MCF 10A (cell line): ENCODE measurements at regions of chr1 and their contacts with region 1.

Region 1: GRCh38 chr1:235160957-235161684 is at the start of gene RBM34:
- DNase-seq: peak; percentile 97
- H3K4me3 Mint-ChIP-seq: peak within 1 kb of the TSS; percentile 84
- H3K27ac Mint-ChIP-seq: peak within 1 kb of the TSS; percentile 95
- H3K4me1 Mint-ChIP-seq: peaks cover 14% of the 10 kb centered on the region
- H3K27me3 Mint-ChIP-seq: no peaks in the 10 kb centered on the region
- CTCF ChIP-seq: no peak
- total RNA-seq, gene RBM34: 150 and 184 TPM in 2 replicates

Region 2: GRCh38 chr1:234478481-234479309 is 682.4 kb before region 1 on chr1 and contains the start of gene TARBP1:
- CTCF ChIA-PET with region 1: no interaction called
- POLR2A ChIA-PET with region 1: interaction called, 11 read pairs
- intact Hi-C with region 1: loop called (anchors 10 kb)
- DNase-seq: peak; percentile 89
- H3K4me3 Mint-ChIP-seq: peak within 1 kb of the TSS; percentile 77
- H3K27ac Mint-ChIP-seq: no peak within 1 kb of the TSS
- H3K4me1 Mint-ChIP-seq: peaks cover 31% of the 10 kb centered on the region
- H3K27me3 Mint-ChIP-seq: peaks cover 23% of the 10 kb centered on the region
- CTCF ChIP-seq: no peak
- total RNA-seq, gene TARBP1: 45.5 and 52.5 TPM in 2 replicates

Region 3: DNA sequence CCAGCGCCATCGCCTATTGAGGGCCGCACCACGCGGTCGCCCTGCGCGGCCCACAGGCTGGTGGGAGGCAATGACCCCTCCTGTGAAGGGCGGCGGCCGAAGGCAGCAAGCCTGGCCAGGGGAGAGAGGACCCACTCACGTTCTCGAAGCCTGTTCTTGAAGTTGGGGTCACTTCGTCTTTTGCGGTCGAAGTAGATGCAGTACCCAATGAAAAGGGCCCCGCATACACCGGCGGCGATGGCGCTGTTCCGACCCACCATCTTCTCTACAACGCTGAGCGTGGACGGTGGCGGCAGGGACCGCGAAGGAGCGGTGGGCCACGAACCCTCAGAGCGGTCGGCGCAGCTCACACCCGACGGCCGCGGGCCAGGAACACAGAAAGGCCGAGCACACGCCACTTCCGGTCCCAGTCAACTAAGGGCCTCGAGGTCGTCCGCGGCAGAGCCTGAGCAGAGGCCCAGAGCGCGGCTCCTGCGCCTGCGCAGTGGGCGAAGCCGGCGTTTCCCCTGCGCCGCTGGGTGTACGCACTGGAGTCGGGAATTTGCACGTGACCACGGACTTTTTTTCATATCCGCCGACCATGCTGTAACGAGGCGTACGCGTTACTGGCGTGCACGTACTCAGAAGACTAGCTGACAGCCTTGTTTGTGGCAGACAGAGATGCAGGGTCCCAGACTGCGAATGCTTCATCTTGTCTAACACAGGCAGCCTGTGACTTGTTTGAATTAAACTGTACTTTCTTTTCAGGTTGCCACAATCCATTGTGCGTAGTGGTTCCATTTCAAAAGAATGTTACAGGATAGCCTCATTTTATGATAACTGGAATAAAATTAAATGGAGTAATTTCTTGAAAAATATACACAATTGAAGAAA is 32.4 kb before region 1 on chr1 and contains the start of gene TOMM20:
- CTCF ChIA-PET with region 1: interaction called, 5 read pairs
- POLR2A ChIA-PET with region 1: interaction called, 131 read pairs
- intact Hi-C with region 1: no loop called
- DNase-seq: peak; percentile 100
- H3K4me3 Mint-ChIP-seq: peak within 1 kb of the TSS; percentile 100
- H3K27ac Mint-ChIP-seq: peak within 1 kb of the TSS; percentile 99
- H3K4me1 Mint-ChIP-seq: peaks cover 23% of the 10 kb centered on the region
- H3K27me3 Mint-ChIP-seq: no peaks in the 10 kb centered on the region
- CTCF ChIP-seq: no peak
- total RNA-seq, gene TOMM20: 309 and 339 TPM in 2 replicates

Region 4: GRCh38 chr1:235147269-235147668 is 13.9 kb before region 1 on chr1:
- CTCF ChIA-PET with region 1: interaction called, 15 read pairs
- POLR2A ChIA-PET with region 1: interaction called, 30 read pairs
- intact Hi-C with region 1: no loop called
- DNase-seq: no peak
- H3K4me3 Mint-ChIP-seq: no peak overlapping the region
- H3K27ac Mint-ChIP-seq: no peak overlapping the region
- H3K4me1 Mint-ChIP-seq: peaks cover 12% of the 10 kb centered on the region
- H3K27me3 Mint-ChIP-seq: no peaks in the 10 kb centered on the region
- CTCF ChIP-seq: no peak

Region 5: GRCh38 chr1:235181561-235182245 is 20.6 kb after region 1 on chr1:
- CTCF ChIA-PET with region 1: interaction called, 3 read pairs
- POLR2A ChIA-PET with region 1: interaction called, 14 read pairs
- intact Hi-C with region 1: no loop called
- DNase-seq: no peak
- H3K4me3 Mint-ChIP-seq: no peak overlapping the region
- H3K27ac Mint-ChIP-seq: no peak overlapping the region
- H3K4me1 Mint-ChIP-seq: no peaks in the 10 kb centered on the region
- H3K27me3 Mint-ChIP-seq: no peaks in the 10 kb centered on the region
- CTCF ChIP-seq: no peak

Region 6: GRCh38 chr1:235286667-235287066 is 125.5 kb after region 1 on chr1:
- CTCF ChIA-PET with region 1: no interaction called
- POLR2A ChIA-PET with region 1: no interaction called
- intact Hi-C with region 1: no loop called
- DNase-seq: peak; percentile 29
- H3K4me3 Mint-ChIP-seq: no peak overlapping the region
- H3K27ac Mint-ChIP-seq: no peak overlapping the region
- H3K4me1 Mint-ChIP-seq: peaks cover 29% of the 10 kb centered on the region
- H3K27me3 Mint-ChIP-seq: no peaks in the 10 kb centered on the region
- CTCF ChIP-seq: no peak